ENCODE measurements at regions of chr5 and their contacts with region 1.

Region 1: GRCh38 chr5:55307383-55308253 is at the starts of genes DHX29 and MTREX:
- DNase-seq: peak; percentile 91
- H3K4me3 ChIP-seq: peak within 1 kb of the TSS; percentile 69 to 89 (median 77)
- H3K27ac ChIP-seq: peak within 1 kb of the TSS; percentile 89
- H3K4me1 ChIP-seq: peaks cover 24% of the 10 kb centered on the region
- H3K27me3 ChIP-seq: no peaks in the 10 kb centered on the region
- CTCF ChIP-seq: no peak
- total RNA-seq, gene DHX29: 21.3 to 26.3 TPM
- total RNA-seq, gene MTREX: 46.0 to 76.1 TPM

Region 2: GRCh38 chr5:57173185-57174127 is 1865.8 kb after region 1 on chr5 and contains the start of gene GPBP1:
- CTCF ChIA-PET with region 1: no interaction called
- dilution Hi-C with region 1: no loop called
- in situ Hi-C with region 1: no loop called
- intact Hi-C with region 1: loop called (anchors 5 kb)
- DNase-seq: peak; percentile 99
- H3K4me3 ChIP-seq: peak within 1 kb of the TSS; percentile 94 to 98 (median 96)
- H3K27ac ChIP-seq: peak within 1 kb of the TSS; percentile 99
- H3K4me1 ChIP-seq: peaks cover 23% of the 10 kb centered on the region
- H3K27me3 ChIP-seq: no peaks in the 10 kb centered on the region
- CTCF ChIP-seq: no peak
- total RNA-seq, gene GPBP1: 39.7 to 55.6 TPM

Measured in mammary epithelial cell (primary cell).